Posterior vena cava (tissue), 2 donors: ENCODE measurements at regions of chr2 and their contacts with region 1.

Region 1: GRCh38 chr2:8583400-8584173 is 98.3 kb upstream of the ID2 start:
- DNase-seq: peak; percentile 97

Region 2: DNA sequence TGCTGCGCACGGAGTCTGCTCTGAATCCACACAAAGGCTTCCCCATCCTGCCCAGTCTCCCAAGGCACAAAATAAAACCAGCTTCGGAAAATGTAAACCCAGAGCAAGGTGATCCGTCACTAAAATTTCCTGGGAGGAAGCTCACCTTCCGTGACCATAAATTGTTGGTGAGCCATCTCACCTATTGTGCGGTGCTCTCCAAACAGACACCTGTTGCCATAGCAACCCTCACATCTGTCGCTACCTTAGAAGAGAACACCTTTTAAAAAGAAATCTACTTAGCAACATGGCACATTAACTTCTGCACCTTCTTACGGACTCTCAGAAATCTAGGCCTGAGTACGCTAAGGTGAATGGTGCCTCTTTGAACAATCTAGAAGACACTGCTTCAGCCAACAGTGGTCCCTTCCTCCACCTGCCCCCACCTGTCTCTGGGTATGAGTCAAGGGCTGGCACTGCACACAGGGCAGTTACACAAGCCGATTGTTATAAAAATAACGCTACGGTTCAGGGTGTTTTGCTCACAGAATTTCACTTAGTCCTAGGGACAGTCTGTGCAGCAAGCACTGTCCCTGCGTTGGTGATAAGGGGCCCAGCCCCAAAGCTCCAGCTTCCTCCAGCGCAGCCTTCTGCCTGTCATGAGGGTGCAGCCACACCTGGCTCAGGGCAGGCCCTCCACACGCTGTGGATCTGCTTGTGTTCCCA is 16.7 kb before region 1 on chr2:
- intact Hi-C with region 1: loop called in 1 of 2 experiments (anchors 1 kb)
- DNase-seq: no peak